ENCODE measurements at regions of chr4 and their contacts with region 1.

Region 1: DNA sequence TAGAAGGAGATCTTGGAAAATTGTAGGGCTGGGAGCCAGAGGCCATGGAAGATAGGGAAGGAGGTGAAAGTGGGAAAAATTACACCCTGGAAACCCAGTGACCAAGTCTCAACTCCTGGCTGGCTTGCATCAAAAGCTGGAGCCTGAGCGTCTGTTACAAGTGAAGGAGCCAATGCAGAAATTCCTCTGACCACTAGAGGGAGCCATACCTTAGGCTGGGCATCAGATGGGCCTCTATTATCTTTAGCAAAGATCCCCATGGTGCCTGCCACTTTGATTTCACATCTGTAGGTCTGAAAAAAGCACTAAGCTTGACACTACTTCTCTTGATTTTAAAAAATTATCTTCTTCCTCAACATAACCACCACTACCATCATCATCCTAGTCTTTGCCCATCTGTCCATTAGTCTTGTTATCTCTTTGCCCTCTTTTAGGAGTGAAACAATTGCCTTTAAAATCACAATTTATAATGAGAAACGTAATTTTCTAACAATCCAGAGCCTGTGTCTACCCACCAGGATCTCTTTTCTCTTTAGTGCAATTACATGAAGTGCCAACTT is 62.9 kb downstream of the ANAPC4 start:
- DNase-seq: peak; percentile 77
- H3K4me3 Mint-ChIP-seq: no peak overlapping the region
- H3K27ac Mint-ChIP-seq: no peak overlapping the region
- H3K4me1 Mint-ChIP-seq: no peaks in the 10 kb centered on the region
- H3K27me3 Mint-ChIP-seq: no peaks in the 10 kb centered on the region
- CTCF ChIP-seq: peak; percentile 73

Region 2: GRCh38 chr4:25051534-25051933 is 388.5 kb before region 1 on chr4:
- CTCF ChIA-PET with region 1: no interaction called
- POLR2A ChIA-PET with region 1: no interaction called
- intact Hi-C with region 1: no loop called
- DNase-seq: no peak
- H3K4me3 Mint-ChIP-seq: no peak overlapping the region
- H3K27ac Mint-ChIP-seq: no peak overlapping the region
- H3K4me1 Mint-ChIP-seq: no peaks in the 10 kb centered on the region
- H3K27me3 Mint-ChIP-seq: peaks cover 17% of the 10 kb centered on the region
- CTCF ChIP-seq: no peak

Region 3: DNA sequence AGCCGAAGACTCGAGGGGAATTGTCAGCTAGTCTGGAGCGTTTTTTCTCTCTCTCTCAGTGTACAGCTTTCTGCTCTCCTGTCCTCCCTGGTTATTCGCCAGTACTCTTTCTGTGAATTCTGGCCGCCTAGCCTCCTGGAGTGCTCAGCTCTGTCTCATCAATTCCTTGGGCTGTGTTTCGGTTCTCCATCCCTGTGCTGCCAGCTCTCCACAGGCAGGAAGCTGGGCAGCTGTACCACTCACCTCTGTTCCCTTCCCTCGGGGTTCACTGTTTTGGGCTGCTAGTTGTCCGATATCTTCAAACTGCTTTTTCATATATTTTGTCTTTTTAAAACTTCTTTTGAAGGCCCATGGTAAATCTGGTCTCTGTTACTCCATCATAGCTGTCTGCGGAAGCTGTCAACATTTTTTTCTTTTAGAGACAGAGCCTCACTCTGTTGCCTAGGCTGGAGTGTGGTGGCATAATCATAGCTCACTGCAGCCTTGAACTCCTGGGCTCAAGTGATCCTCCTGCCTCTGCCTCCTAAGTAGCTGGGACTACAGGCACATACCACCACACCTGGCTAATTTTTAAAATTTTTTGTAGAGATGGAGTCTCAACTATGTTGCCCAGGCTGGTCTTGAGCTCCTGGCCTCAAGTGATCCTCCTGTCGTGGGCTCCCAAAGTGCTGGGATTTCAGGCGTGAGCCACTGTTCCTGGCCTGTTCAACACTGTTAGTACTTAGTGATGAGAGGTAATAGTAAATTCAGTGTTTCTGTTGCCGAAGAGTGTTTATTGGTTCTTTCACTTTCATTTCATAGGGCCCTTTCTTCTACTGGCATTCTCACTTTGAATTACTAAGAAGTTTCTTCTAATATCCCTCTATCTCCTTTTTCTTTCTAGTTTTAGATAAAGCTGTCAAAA is 108.8 kb before region 1 on chr4:
- CTCF ChIA-PET with region 1: no interaction called
- POLR2A ChIA-PET with region 1: no interaction called
- intact Hi-C with region 1: no loop called
- DNase-seq: no peak
- H3K4me3 Mint-ChIP-seq: no peak overlapping the region
- H3K27ac Mint-ChIP-seq: no peak overlapping the region
- H3K4me1 Mint-ChIP-seq: no peaks in the 10 kb centered on the region
- H3K27me3 Mint-ChIP-seq: no peaks in the 10 kb centered on the region
- CTCF ChIP-seq: no peak

Region 4: DNA sequence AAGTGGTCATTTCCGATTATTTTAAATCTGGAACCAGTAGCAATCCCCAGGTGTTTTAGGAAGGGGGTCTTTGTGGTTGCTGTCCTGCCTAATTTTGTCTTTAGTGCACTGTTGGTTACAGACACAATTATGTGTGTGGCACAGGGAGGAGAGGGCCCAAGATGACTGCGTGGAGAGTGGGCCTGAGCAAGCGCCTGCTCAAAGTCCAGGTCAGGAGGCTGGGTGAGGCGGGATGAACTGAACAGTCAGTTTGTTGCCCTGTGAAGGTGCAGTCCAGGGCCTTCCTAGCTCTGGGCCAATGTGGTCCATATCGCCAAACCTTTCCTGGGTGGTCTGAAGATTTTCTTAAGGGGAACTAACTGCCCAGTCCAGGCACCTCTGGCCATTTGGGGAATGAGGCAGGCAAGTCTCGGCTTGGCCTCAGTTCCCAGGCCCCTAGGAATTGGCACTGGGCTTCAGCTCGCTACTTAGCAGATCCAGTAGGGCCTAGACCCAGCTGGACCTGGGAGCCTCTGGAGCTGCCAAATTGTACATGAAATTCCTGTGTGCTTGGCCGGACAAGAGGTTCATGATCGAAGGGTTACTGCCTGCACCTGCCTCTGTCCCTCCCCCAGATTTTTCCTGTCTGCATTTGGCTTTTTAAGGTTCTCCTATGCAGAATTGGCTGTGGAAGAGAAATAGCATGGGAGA is 15.3 kb before region 1 on chr4:
- CTCF ChIA-PET with region 1: interaction called, 23 read pairs
- POLR2A ChIA-PET with region 1: interaction called, 3 read pairs
- intact Hi-C with region 1: no loop called
- DNase-seq: no peak
- H3K4me3 Mint-ChIP-seq: no peak overlapping the region
- H3K27ac Mint-ChIP-seq: no peak overlapping the region
- H3K4me1 Mint-ChIP-seq: no peaks in the 10 kb centered on the region
- H3K27me3 Mint-ChIP-seq: no peaks in the 10 kb centered on the region
- CTCF ChIP-seq: no peak

Region 5: DNA sequence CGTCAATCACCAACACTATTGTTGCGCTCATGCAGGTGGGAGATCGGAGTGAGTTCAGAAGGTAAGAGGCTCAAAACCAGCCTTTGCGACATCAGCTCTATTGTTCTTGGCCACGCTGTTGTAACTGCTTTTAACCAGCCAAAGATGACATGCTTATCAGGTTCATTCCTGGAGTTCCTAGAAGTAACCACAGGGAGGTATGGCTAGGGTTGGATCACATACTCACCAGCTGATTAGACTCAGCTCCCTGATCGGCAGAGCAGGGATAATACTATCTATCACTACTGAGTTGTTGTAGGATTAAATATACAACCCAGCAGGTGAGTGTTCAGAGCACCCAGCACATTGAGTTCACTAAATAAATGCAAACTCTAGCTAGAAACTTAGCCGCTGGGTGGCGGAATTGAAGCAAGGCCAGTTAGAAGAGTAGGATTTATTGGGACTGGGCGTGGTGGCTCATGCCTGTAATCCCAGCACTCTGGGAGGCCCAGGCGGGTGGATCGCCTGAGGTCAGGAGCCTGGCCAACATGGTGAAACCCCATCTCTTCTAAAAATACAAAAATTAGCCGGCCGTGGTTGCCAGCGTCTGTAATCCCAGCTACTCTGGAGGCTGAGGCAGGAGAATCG is 228.0 kb after region 1 on chr4:
- CTCF ChIA-PET with region 1: interaction called, 10 read pairs
- POLR2A ChIA-PET with region 1: no interaction called
- intact Hi-C with region 1: no loop called
- DNase-seq: no peak
- H3K4me3 Mint-ChIP-seq: no peak overlapping the region
- H3K27ac Mint-ChIP-seq: no peak overlapping the region
- H3K4me1 Mint-ChIP-seq: no peaks in the 10 kb centered on the region
- H3K27me3 Mint-ChIP-seq: no peaks in the 10 kb centered on the region
- CTCF ChIP-seq: no peak

Region 6: GRCh38 chr4:25767877-25768725 is 328.1 kb after region 1 on chr4:
- CTCF ChIA-PET with region 1: interaction called, 309 read pairs
- POLR2A ChIA-PET with region 1: interaction called, 4 read pairs
- intact Hi-C with region 1: loop called (anchors 1 kb)
- DNase-seq: peak; percentile 75
- H3K4me3 Mint-ChIP-seq: no peak overlapping the region
- H3K27ac Mint-ChIP-seq: no peak overlapping the region
- H3K4me1 Mint-ChIP-seq: no peaks in the 10 kb centered on the region
- H3K27me3 Mint-ChIP-seq: no peaks in the 10 kb centered on the region
- CTCF ChIP-seq: peak; percentile 85

Region 7: DNA sequence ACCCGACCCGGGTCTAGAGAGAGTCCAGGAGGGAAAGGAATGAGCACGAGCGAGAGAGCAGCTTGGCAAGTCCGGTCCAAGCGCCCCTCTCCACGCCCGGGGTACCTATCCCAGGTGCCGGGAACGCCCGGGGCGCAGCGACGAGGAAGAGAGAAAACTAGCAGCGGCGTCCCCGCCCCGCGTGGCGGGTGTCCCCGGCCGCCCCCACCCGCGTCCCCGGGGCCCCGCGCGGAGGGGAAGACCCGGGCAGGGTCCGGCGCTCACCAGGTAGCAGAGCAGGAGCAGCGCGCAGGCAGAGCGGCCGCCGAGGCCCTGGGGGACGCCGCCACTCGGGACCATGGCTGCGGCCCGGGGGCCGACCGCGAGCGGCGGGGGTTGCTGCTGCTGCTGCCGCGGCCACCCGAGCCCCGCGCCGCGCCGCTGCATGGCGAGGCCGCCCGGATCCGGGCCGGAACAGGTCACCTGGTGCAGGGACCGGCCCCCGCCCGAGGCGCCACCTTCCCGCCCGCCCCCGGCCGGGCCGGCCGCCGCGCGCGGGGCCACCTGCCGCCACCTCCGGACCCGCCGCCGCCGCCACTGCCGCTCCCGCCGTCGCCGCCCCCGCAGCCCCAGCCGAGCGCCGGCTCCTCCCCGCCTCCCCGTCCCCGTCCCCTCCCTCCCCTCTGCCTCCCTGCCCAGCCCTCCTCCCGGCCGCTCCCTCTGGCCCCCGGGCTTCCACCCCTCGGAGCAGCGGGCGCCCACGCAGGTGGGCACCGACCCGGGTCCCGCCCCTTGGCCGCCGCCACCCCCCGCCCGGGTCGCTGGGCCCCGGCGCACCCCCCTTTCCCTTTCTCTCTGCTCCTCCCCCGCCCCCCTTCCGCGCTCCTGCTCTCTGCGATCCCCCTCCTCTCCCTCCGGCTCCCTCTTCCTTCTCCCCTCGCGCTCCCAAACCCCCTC is 422.7 kb after region 1 on chr4 and contains the start of gene SEL1L3:
- CTCF ChIA-PET with region 1: interaction called, 12 read pairs
- POLR2A ChIA-PET with region 1: no interaction called
- intact Hi-C with region 1: no loop called
- DNase-seq: peak; percentile 19
- H3K4me3 Mint-ChIP-seq: peak within 1 kb of the TSS; percentile 96
- H3K27ac Mint-ChIP-seq: peak within 1 kb of the TSS; percentile 91
- H3K4me1 Mint-ChIP-seq: peaks cover 24% of the 10 kb centered on the region
- H3K27me3 Mint-ChIP-seq: no peaks in the 10 kb centered on the region
- CTCF ChIP-seq: no peak
- total RNA-seq, gene SEL1L3: 28.1 and 49.4 TPM in 2 replicates